Activated CD4-positive, alpha-beta T cell treated with anti-CD3 and anti-CD28 coated beads for 36 hours (primary cell): ENCODE measurements at regions of chr15 and their contacts with region 1.

Region 1: DNA sequence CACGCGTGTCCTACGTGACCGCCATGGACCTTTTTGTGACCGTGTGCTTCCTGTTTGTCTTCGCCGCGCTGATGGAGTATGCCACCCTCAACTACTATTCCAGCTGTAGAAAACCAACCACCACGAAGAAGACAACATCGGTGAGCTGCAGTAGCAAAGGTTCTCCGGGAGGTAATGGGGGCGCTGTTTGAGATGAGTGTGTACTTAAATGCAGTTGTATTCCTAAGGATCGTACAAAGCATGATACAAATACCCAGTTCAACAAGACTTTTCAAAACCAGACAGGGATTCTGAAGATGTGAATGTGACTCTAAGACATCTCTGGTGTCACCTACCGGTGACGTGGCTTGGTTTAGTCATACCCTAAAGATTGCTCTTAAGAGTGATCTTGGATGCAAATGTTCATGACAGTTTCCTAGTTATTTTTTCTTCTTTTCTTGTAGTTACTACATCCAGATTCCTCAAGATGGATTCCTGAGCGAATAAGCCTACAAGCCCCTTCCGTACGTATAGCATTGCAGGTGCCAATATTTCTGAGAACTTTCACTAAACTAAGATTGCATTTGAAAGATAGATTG is 556.6 kb downstream of the GABRG3 start:
- DNase-seq: no peak
- ATAC-seq: no peak
- H3K4me3 Mint-ChIP-seq: no peak overlapping the region
- H3K27ac Mint-ChIP-seq: no peak overlapping the region
- H3K4me1 Mint-ChIP-seq: no peaks in the 10 kb centered on the region
- H3K27me3 Mint-ChIP-seq: no peaks in the 10 kb centered on the region

Region 2: GRCh38 chr15:26864664-26865191 is 662.9 kb before region 1 on chr15:
- CTCF ChIA-PET with region 1: no interaction called
- POLR2A ChIA-PET with region 1: no interaction called
- intact Hi-C with region 1: no loop called
- DNase-seq: peak; percentile 39
- ATAC-seq: no peak
- H3K4me3 Mint-ChIP-seq: no peak overlapping the region
- H3K27ac Mint-ChIP-seq: no peak overlapping the region
- H3K4me1 Mint-ChIP-seq: no peaks in the 10 kb centered on the region
- H3K27me3 Mint-ChIP-seq: peaks cover 31% of the 10 kb centered on the region

Region 3: DNA sequence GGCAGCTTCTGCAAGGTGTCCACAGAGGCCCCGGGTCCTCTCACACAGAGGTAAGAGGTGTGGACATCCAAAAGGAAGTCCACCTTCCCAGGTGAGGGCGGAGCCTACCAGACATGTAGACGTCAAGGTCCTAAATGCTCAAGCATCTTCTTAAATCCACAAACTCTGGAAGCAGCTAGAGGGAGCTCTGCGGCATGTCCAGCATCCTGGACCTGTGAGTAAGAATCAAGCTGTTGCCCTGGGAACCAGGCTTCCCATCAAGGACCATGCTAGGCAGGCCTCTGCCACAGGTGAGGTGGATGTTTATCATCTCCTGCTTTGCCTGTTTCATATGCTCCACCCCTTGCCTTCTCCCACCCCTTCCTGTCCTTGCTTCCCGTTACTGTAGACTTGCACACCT is 188.4 kb before region 1 on chr15:
- CTCF ChIA-PET with region 1: no interaction called
- POLR2A ChIA-PET with region 1: no interaction called
- intact Hi-C with region 1: loop called in 1 of 2 experiments (anchors 5 kb)
- DNase-seq: no peak
- ATAC-seq: no peak
- H3K4me3 Mint-ChIP-seq: no peak overlapping the region
- H3K27ac Mint-ChIP-seq: no peak overlapping the region
- H3K4me1 Mint-ChIP-seq: no peaks in the 10 kb centered on the region
- H3K27me3 Mint-ChIP-seq: no peaks in the 10 kb centered on the region

Region 4: GRCh38 chr15:27545494-27546255 is 18.1 kb after region 1 on chr15:
- CTCF ChIA-PET with region 1: no interaction called
- POLR2A ChIA-PET with region 1: no interaction called
- intact Hi-C with region 1: loop called in 1 of 2 experiments (anchors 2 kb)
- DNase-seq: no peak
- ATAC-seq: no peak
- H3K4me3 Mint-ChIP-seq: no peak overlapping the region
- H3K27ac Mint-ChIP-seq: no peak overlapping the region
- H3K4me1 Mint-ChIP-seq: no peaks in the 10 kb centered on the region
- H3K27me3 Mint-ChIP-seq: no peaks in the 10 kb centered on the region